ENCODE measurements at regions of chr14 and their contacts with region 1.

Region 1: DNA sequence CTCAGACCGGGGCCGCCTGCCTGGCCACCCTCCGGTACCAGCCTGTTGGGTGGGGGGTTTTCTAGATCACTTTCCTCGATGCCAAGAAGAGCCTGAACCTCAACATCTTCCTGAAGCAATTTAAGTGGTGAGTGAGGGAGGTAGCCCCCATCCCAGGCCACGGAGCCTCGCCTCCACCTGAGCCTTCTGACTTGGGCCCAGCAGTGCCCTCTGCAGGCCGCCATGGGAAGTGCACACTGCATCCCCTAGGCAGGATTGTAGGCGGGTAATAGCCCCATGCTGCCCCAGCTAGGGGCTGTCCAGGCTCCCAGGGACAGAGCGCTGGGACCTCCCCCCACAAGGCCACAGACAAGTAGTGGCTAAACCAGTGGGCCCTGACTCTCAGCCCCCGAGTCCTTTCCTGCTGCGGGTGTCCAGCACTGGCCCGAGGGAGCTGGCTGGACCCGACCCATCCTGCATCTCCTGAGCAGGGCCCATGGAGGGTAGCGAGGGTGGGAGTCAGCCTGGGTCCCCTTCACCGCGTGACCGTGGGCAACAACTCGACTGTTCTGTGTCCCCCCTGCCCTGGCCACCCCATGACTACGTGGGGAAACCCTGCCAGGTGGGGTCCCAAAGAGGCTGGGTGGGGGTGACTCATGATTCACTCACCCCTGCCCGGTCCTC is 15.3 kb upstream of the ADSS1 start:
- DNase-seq: peak in 1 of 2 donors; percentile 94
- H3K4me3 ChIP-seq: no peak overlapping the region
- CTCF ChIP-seq: peak in 2 of 3 donors; percentile 5 to 84
- POLR2A ChIP-seq: no peak

Region 2: DNA sequence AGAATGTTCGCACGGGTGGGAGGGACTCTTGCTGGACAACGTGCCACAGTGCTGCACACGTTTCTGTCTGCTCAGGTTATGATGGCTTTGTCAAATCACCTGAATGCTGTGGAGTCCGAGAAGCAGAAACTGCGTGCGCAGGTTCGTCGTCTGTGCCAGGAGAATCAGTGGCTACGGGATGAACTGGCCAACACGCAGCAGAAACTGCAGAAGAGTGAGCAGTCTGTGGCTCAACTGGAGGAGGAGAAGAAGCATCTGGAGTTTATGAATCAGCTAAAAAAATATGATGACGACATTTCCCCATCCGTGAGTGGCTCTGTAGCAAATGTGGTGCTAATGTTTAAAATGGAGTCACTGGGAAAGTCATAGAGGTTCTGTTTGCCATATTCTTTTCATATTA is 1051.3 kb before region 1 on chr14:
- intact Hi-C with region 1: no loop called
- DNase-seq: no peak
- H3K4me3 ChIP-seq: no peak overlapping the region
- CTCF ChIP-seq: no peak
- POLR2A ChIP-seq: no peak

Region 3: GRCh38 chr14:104614134-104614812 is 94.5 kb before region 1 on chr14:
- intact Hi-C with region 1: no loop called
- DNase-seq: no peak
- H3K4me3 ChIP-seq: no peak overlapping the region
- CTCF ChIP-seq: no peak
- POLR2A ChIP-seq: no peak

Region 4: DNA sequence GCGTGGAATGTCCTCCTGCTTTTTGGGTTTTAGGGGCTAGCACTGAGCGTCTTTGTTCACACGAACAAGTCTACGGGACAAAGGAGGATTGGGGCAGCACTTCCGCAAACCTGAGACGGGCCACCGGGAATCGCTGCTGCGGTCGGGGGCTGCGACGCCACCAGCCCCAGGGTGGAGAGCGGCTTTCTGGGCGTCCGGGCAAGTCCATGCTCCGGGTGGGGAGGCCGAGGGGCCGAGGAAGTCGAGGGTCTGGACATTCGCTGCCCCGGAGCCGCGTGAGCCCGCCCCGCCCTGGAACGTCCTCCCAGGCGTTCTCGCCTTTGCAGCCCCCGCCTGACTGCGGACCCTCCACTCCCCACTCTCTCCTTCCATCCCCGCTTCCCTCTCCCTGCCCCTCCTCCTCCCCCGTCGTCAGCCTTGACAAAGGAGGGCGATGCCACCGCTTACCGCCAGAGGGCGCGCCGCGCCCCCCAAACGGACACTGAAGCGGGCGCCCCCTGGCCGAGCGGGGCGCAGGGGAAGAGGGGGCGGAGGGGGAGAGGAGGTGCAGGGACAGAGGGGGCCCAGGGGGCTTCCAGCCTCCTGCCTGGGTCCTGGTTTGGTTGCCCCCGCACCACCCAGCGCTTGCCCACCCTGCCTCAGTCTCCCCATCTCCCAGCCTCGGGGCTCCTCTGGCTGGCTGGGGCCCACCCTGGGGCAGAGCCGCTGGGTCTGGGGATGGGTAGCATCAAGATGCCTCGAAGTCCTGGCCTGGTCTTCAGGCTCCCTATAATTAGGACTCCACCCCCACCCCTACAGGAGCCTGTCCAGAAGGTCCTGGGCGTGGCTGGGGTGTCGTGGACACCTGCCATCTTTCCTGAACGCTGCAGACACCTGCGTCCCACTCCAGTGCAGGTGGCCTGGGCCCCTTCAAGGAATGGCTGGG is 58.4 kb before region 1 on chr14:
- intact Hi-C with region 1: loop called (anchors 2 kb)
- DNase-seq: peak; percentile 37 to 92
- H3K4me3 ChIP-seq: no peak overlapping the region
- CTCF ChIP-seq: peak in 1 of 3 donors; percentile 33
- POLR2A ChIP-seq: no peak